Heart right ventricle (tissue), 16 donors: ENCODE measurements at regions of chr3 and their contacts with region 1.

Region 1: GRCh38 chr3:103033841-103034240 is 599.0 kb downstream of the ZPLD1 start:
- DNase-seq: no peak
- ATAC-seq: no peak
- H3K4me3 ChIP-seq: no peak overlapping the region
- H3K27ac ChIP-seq: no peak overlapping the region
- H3K4me1 ChIP-seq: no peaks in the 10 kb centered on the region
- H3K27me3 ChIP-seq: no peaks in the 10 kb centered on the region
- CTCF ChIP-seq: no peak

Region 2: DNA sequence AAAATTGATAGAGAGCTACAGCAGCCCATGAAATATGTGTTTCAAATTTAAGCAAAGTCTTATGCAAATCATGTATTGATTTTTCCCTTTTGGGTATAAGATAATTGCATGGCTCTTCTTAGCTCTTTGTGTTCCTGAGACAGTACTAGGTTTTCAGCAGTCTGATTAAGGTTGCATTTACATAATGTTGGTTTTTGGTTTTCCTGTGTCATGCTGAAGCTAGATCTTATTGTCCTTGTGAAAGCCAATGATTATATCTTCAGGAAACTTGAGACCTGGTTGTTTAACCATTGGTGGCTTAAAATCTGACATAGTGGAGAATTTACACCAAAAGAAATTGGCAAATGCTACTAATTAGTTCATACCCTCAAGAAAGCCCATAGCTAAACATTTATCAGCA is 206.5 kb before region 1 on chr3:
- intact Hi-C with region 1: loop called in 1 of 10 experiments (anchors 5 kb)
- DNase-seq: no peak
- ATAC-seq: no peak
- H3K4me3 ChIP-seq: no peak overlapping the region
- H3K27ac ChIP-seq: no peak overlapping the region
- H3K4me1 ChIP-seq: no peaks in the 10 kb centered on the region
- H3K27me3 ChIP-seq: no peaks in the 10 kb centered on the region
- CTCF ChIP-seq: no peak

Region 3: GRCh38 chr3:103002425-103003176 is 31.2 kb before region 1 on chr3:
- intact Hi-C with region 1: no loop called
- DNase-seq: no peak
- ATAC-seq: no peak
- H3K4me3 ChIP-seq: no peak overlapping the region
- H3K27ac ChIP-seq: no peak overlapping the region
- H3K4me1 ChIP-seq: no peaks in the 10 kb centered on the region
- H3K27me3 ChIP-seq: no peaks in the 10 kb centered on the region
- CTCF ChIP-seq: no peak